Aorta (tissue), 5 donors: ENCODE measurements at regions of chr1 and their contacts with region 1.

Region 1: GRCh38 chr1:62687903-62688686 is at the start of gene DOCK7:
- DNase-seq: peak; percentile 88 to 94
- ATAC-seq: peak; percentile 92
- H3K4me3 ChIP-seq: peak within 1 kb of the TSS; percentile 86 to 94
- H3K27ac ChIP-seq: peak within 1 kb of the TSS; percentile 23 to 71
- H3K4me1 ChIP-seq: peaks cover 0 to 4% of the 10 kb centered on the region in 2 donors
- H3K27me3 ChIP-seq: no peaks in the 10 kb centered on the region
- total RNA-seq, gene DOCK7: 40.3 to 64.1 TPM

Region 2: DNA sequence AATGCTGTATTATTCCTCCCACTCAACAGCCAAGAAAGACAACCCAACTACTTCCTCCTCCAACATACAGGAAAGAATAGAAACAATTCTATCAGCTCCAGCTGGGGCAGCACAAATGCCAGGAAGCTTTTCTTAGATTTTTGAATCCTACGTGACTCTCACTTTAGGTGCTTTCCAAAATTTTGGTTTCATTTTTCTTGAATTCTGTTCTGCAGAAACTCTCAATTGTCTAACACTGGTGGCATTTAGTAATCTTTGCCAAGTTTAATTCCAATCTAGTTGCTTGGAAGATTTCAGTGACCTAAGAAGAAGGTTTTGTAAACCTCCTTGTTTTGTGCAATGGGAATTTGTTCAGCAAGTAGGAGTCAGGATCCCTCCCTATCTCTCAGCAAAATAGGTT is 37.2 kb after region 1 on chr1:
- intact Hi-C with region 1: loop called (anchors 5 kb)
- DNase-seq: no peak
- ATAC-seq: peak; percentile 29
- H3K4me3 ChIP-seq: peak overlapping the region; percentile 43 to 59
- H3K27ac ChIP-seq: peak overlapping the region in 1 of 2 donors; percentile 57
- H3K4me1 ChIP-seq: peaks cover 0 to 3% of the 10 kb centered on the region in 2 donors
- H3K27me3 ChIP-seq: no peaks in the 10 kb centered on the region